Vagina (tissue), 2 donors: ENCODE measurements at regions of chr3 and their contacts with region 1.

Region 1: GRCh38 chr3:111859974-111860859 is 1.2 kb downstream of the PHLDB2 start:
- DNase-seq: peak in 1 of 2 donors; percentile 95
- H3K4me3 ChIP-seq: peak overlapping the region; percentile 72 to 89
- H3K27ac ChIP-seq: peak overlapping the region; percentile 97
- H3K4me1 ChIP-seq: peaks cover 44% of the 10 kb centered on the region
- H3K27me3 ChIP-seq: no peaks in the 10 kb centered on the region
- CTCF ChIP-seq: peak; percentile 17 to 60 (median 21)
- POLR2A ChIP-seq: peak in 1 of 2 donors; percentile 55

Region 2: DNA sequence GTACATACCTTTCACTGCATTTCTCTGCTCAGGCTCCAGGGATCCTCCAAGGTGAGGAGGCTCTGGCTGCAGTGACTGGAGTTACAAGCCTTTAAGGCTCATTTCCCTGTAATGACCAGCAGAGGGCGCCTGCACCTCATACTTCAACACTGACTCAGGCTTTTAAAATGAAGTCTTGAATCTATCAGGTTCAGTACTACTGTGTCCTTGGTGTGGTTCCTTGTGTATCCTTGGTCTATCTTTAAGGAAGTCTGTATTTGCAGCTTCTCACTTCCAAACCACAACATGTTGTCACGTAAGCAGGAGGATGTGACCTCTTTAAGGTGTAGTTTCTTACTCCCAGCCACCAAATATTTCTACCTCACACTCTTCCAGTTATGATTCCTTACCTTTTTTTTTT is 142.6 kb before region 1 on chr3:
- intact Hi-C with region 1: loop called (anchors 1 kb)
- DNase-seq: no peak
- H3K4me3 ChIP-seq: no peak overlapping the region
- H3K27ac ChIP-seq: peak overlapping the region; percentile 18
- H3K4me1 ChIP-seq: peaks cover 10% of the 10 kb centered on the region
- H3K27me3 ChIP-seq: no peaks in the 10 kb centered on the region
- CTCF ChIP-seq: peak; percentile 87 to 98 (median 94)
- POLR2A ChIP-seq: no peak

Region 3: GRCh38 chr3:111803123-111803593 is 57.1 kb before region 1 on chr3:
- intact Hi-C with region 1: loop called (anchors 2 kb)
- DNase-seq: peak in 1 of 2 donors; percentile 94
- H3K4me3 ChIP-seq: no peak overlapping the region
- H3K27ac ChIP-seq: peak overlapping the region; percentile 70
- H3K4me1 ChIP-seq: peaks cover 36% of the 10 kb centered on the region
- H3K27me3 ChIP-seq: no peaks in the 10 kb centered on the region
- CTCF ChIP-seq: no peak
- POLR2A ChIP-seq: no peak

Region 4: GRCh38 chr3:111967651-111968274 is 107.5 kb after region 1 on chr3:
- intact Hi-C with region 1: loop called (anchors 10 kb)
- DNase-seq: no peak
- H3K4me3 ChIP-seq: no peak overlapping the region
- H3K27ac ChIP-seq: peak overlapping the region; percentile 6
- H3K4me1 ChIP-seq: peaks cover 7% of the 10 kb centered on the region
- H3K27me3 ChIP-seq: no peaks in the 10 kb centered on the region
- CTCF ChIP-seq: peak; percentile 83 to 88 (median 85)
- POLR2A ChIP-seq: no peak

Region 5: DNA sequence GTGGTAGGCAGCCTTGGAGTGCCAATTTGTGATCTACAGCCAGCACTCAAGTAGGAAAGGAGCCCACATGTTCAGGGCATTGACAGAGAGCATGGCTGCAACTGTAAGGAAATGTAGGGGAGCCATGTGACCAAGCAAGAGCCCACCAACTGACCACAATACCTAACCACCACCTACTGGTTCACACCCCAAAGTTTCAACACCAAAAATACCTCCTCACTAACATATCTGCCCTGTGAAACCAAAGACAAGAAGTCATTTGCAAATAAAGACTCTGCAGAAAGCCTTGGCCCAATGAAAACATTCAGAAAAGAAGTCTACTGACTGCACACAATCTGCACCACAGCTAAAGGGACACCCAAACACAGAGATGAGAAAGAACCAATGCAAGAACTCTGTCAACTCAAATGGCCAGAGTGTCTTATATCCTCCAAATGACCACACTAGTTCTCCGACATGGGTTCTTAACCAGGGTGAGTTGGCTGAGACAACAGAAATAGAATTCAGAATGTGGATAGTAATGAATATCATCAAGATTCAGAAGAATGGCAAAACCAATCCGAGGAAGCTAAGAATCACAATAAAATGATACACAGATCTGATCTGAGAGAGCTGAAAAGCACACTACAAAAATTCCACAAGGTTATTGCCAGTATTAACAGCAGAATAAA is 393.2 kb after region 1 on chr3:
- intact Hi-C with region 1: no loop called
- DNase-seq: no peak
- H3K4me3 ChIP-seq: no peak overlapping the region
- H3K27ac ChIP-seq: no peak overlapping the region
- H3K4me1 ChIP-seq: no peaks in the 10 kb centered on the region
- H3K27me3 ChIP-seq: no peaks in the 10 kb centered on the region
- CTCF ChIP-seq: no peak
- POLR2A ChIP-seq: no peak